ENCODE measurements at regions of chr12 and their contacts with region 1.

Region 1: GRCh38 chr12:119949145-119949544 is 39.9 kb upstream of the BICDL1 start:
- DNase-seq: no peak
- ATAC-seq: no peak
- H3K4me3 ChIP-seq: no peak overlapping the region
- H3K4me3 Mint-ChIP-seq: no peak overlapping the region
- H3K27ac ChIP-seq: no peak overlapping the region
- H3K27ac Mint-ChIP-seq: no peak overlapping the region
- H3K4me1 ChIP-seq: no peaks in the 10 kb centered on the region
- H3K4me1 Mint-ChIP-seq: no peaks in the 10 kb centered on the region
- H3K27me3 ChIP-seq: peaks cover 0 to 3% (median 0%) of the 10 kb centered on the region in 4 experiments
- H3K27me3 Mint-ChIP-seq: peaks cover 16% of the 10 kb centered on the region
- CTCF ChIP-seq: no peak

Region 2: GRCh38 chr12:119885549-119885948 is 63.6 kb before region 1 on chr12:
- CTCF ChIA-PET with region 1: no interaction called
- POLR2A ChIA-PET with region 1: no interaction called
- intact Hi-C with region 1: no loop called
- DNase-seq: no peak
- ATAC-seq: no peak
- H3K4me3 ChIP-seq: no peak overlapping the region
- H3K4me3 Mint-ChIP-seq: no peak overlapping the region
- H3K27ac ChIP-seq: no peak overlapping the region
- H3K27ac Mint-ChIP-seq: no peak overlapping the region
- H3K4me1 ChIP-seq: no peaks in the 10 kb centered on the region
- H3K4me1 Mint-ChIP-seq: no peaks in the 10 kb centered on the region
- H3K27me3 ChIP-seq: peaks cover 0 to 2% (median 0%) of the 10 kb centered on the region in 4 experiments
- H3K27me3 Mint-ChIP-seq: peaks cover 28% of the 10 kb centered on the region
- CTCF ChIP-seq: no peak

Region 3: GRCh38 chr12:119938049-119938667 is 11.0 kb before region 1 on chr12:
- CTCF ChIA-PET with region 1: interaction called, 11 read pairs
- POLR2A ChIA-PET with region 1: no interaction called
- intact Hi-C with region 1: no loop called
- DNase-seq: peak; percentile 71
- ATAC-seq: peak; percentile 61
- H3K4me3 ChIP-seq: no peak overlapping the region
- H3K4me3 Mint-ChIP-seq: no peak overlapping the region
- H3K27ac ChIP-seq: no peak overlapping the region
- H3K27ac Mint-ChIP-seq: no peak overlapping the region
- H3K4me1 ChIP-seq: no peaks in the 10 kb centered on the region
- H3K4me1 Mint-ChIP-seq: no peaks in the 10 kb centered on the region
- H3K27me3 ChIP-seq: no peaks in the 10 kb centered on the region
- H3K27me3 Mint-ChIP-seq: peaks cover 7% of the 10 kb centered on the region
- CTCF ChIP-seq: peak; percentile 89

Region 4: DNA sequence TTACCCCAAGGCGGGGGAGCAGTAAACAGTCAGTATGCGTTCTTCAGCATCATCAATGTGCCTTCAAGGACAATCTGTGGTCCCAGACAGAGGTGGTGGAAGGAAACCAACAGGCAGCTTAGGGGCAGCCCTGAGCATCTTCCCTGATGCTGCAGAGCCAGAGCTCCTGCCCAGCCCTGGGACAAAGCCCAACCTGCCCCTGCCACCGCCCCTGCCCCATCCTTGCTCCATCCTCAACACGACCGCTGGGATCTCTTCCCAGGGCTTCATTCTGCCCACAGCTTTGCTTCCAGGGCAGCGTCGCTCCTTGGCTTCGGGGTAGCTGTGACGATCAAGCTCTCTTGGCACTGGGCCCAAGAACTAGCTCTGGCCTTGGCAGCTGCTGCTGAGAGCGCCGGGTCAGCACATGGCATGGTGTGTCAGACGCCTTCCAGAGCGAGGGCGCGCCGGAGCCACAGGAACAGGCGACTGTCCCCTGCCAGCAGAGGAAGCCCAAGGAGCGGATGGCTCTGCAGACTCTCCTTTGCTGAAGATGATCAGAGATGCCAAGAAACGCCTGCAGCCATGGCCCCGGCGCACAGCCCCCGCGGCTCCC is 151.4 kb after region 1 on chr12:
- CTCF ChIA-PET with region 1: no interaction called
- POLR2A ChIA-PET with region 1: no interaction called
- intact Hi-C with region 1: no loop called
- DNase-seq: no peak
- ATAC-seq: no peak
- H3K4me3 ChIP-seq: no peak overlapping the region
- H3K4me3 Mint-ChIP-seq: no peak overlapping the region
- H3K27ac ChIP-seq: no peak overlapping the region
- H3K27ac Mint-ChIP-seq: no peak overlapping the region
- H3K4me1 ChIP-seq: no peaks in the 10 kb centered on the region
- H3K4me1 Mint-ChIP-seq: peaks cover 6% of the 10 kb centered on the region
- H3K27me3 ChIP-seq: no peaks in the 10 kb centered on the region
- H3K27me3 Mint-ChIP-seq: no peaks in the 10 kb centered on the region
- CTCF ChIP-seq: no peak